RWPE1 (cell line): ENCODE measurements at regions of chr7 and their contacts with region 1.

Region 1: DNA sequence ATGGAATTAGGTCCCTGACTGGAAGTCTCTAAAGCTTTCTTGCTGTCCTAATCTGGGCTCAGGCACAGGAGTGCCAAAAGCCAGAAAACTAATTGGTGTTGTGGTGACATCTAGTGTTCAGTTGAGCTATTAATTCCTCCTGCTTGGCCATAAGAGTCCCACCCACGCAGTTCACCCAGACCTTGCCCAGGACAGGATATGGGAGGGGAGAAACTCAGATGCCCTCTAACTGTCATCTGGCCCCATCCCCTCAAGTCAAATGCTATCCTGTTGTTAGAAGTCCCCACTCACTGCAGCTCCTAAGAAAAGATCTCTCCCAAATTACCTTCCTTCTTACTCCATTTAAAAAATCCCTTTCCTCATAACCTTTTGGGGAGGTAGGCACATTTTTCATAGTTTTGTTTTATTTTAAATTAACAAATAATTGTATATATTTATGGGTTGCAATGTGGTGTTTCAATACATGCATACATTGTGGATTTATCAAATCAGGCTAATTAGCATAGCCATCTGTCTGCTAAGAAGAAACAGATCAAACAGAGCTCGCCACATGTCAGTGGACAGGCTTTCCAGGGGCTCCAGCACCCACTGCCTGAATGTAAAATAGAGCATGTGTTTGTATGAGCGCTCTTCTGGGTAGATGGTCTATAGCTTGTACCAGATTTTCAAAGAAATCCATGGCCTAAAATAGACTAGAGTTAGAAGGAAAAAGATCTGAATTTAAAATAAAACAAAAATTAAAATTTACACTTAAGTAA is 84.0 kb downstream of the GSAP start:
- DNase-seq: peak; percentile 83
- H3K27ac ChIP-seq: no peak overlapping the region
- CTCF ChIP-seq: peak; percentile 86

Region 2: GRCh38 chr7:77321300-77321699 is 10.8 kb before region 1 on chr7:
- CTCF ChIA-PET with region 1: interaction called, 10 read pairs
- POLR2A ChIA-PET with region 1: no interaction called
- DNase-seq: no peak
- H3K27ac ChIP-seq: no peak overlapping the region
- CTCF ChIP-seq: no peak